ENCODE measurements at regions of chr4 and their contacts with region 1.

Region 1: GRCh38 chr4:139978692-139979091 is 175.3 kb downstream of the MAML3 start:
- DNase-seq: no peak
- H3K4me3 Mint-ChIP-seq: peak overlapping the region; percentile 38
- H3K27ac Mint-ChIP-seq: no peak overlapping the region
- H3K4me1 Mint-ChIP-seq: peaks cover 42% of the 10 kb centered on the region
- H3K27me3 Mint-ChIP-seq: no peaks in the 10 kb centered on the region

Region 2: DNA sequence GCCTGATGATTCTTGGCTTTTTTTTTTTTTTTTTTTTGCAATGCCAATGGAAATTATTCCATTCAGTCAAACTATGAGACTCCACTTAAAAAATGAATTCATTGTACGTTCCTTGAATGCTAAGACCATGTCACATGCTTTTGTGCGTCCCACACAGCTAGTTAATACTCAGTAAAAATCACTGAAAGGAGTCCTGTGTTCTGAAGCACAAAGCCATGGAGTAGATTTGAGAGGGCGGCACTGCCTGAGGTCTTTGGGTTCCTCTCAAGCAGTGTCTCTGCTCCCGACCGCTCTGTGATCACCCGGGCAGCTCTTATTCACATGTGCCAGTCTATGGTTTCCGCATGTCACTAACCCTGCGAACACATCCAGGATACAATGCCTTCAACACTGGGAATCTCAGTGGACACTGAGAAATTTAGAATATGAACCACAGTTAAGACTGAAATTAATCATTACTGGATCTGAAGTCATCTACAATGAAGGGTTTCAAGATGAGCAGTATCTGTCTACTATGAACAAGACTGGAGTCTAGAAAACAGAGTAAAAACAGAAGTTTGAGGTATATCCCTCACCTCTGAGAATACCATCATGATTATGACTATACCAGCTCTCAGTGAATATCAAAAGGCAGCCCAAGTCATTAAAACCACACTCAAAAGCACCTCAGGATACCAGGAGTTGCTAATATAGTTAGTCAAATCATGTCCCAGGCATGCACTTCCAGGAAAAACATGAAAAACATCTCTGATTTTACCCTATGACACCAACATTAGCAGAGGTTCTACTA is 120.1 kb before region 1 on chr4:
- intact Hi-C with region 1: loop called (anchors 1 kb)
- DNase-seq: no peak
- H3K4me3 Mint-ChIP-seq: no peak overlapping the region
- H3K27ac Mint-ChIP-seq: no peak overlapping the region
- H3K4me1 Mint-ChIP-seq: peaks cover 33% of the 10 kb centered on the region
- H3K27me3 Mint-ChIP-seq: peaks cover 18% of the 10 kb centered on the region

Region 3: GRCh38 chr4:139898293-139898692 is 80.4 kb before region 1 on chr4:
- intact Hi-C with region 1: loop called (anchors 5 kb)
- DNase-seq: no peak
- H3K4me3 Mint-ChIP-seq: no peak overlapping the region
- H3K27ac Mint-ChIP-seq: peak overlapping the region; percentile 27
- H3K4me1 Mint-ChIP-seq: peaks cover 19% of the 10 kb centered on the region
- H3K27me3 Mint-ChIP-seq: peaks cover 6% of the 10 kb centered on the region

Region 4: GRCh38 chr4:139988863-139989733 is 10.4 kb after region 1 on chr4:
- intact Hi-C with region 1: loop called (anchors 1 kb)
- DNase-seq: no peak
- H3K4me3 Mint-ChIP-seq: no peak overlapping the region
- H3K27ac Mint-ChIP-seq: no peak overlapping the region
- H3K4me1 Mint-ChIP-seq: peaks cover 12% of the 10 kb centered on the region
- H3K27me3 Mint-ChIP-seq: peaks cover 12% of the 10 kb centered on the region

Measured in activated T-helper 1 cell treated with anti-CD3 and anti-CD28 coated beads, Interleukin-12 subunit alpha, Interleukin-12 subunit beta, Interleukin-2, Interleukin-4 antibody, amounts not matched to agents 30 ng/mL and 10 ng/mL and 1 ng/mL, durations not matched to agents 14 hours and 24 hours and 36 hours (primary cell).